ENCODE measurements at regions of chr5 and their contacts with region 1.

Region 1: DNA sequence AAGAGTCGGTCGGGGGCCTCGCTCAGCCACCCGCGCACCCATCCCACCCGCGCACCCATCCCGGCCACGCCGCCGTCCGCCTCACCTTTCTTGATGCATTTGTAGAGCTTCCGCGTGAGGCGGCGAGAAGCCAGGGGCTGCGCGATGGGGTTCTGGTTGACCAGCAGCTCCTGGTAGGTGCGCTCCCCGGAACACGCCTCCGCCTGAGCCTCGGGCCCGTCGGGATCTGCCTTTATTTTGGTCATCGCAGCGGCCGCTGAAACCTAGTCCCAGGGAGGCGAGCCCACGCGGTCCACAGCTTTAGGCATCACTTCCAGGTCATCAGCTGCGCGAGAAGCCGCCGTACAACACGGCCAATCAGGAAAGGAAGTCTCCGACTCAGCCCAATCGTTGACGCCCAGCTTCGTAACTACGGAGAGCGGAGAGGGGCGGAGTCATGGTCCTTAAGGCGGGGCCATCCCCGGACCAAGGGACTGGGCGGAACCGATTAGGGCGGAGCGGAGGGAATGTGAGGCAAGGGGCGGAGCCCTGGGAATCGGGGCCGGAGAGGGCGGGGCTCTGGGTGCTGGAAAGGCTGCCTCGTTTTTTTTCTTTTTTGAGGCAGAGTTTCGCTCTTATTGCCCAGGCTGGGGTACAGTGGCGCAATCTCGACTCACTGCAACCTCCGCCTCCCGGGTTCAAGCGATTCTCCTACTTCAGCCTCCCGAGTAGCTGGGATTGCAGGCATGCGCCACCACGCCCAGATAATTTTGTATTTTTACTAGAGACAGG is at the start of gene NHP2:
- DNase-seq: peak; percentile 89
- H3K4me3 ChIP-seq: peak within 1 kb of the TSS; percentile 85
- H3K27me3 ChIP-seq: no peaks in the 10 kb centered on the region
- CTCF ChIP-seq: no peak
- polyA plus RNA-seq, gene NHP2: 101 and 131 TPM in 2 replicates

Region 2: GRCh38 chr5:177539411-177539810 is 614.3 kb before region 1 on chr5:
- CTCF ChIA-PET with region 1: no interaction called
- POLR2A ChIA-PET with region 1: interaction called, 13 read pairs
- DNase-seq: peak; percentile 46
- H3K4me3 ChIP-seq: no peak overlapping the region
- H3K27me3 ChIP-seq: no peaks in the 10 kb centered on the region
- CTCF ChIP-seq: no peak

Measured in BJ (cell line).